ENCODE measurements at regions of chr17 and their contacts with region 1.

Region 1: DNA sequence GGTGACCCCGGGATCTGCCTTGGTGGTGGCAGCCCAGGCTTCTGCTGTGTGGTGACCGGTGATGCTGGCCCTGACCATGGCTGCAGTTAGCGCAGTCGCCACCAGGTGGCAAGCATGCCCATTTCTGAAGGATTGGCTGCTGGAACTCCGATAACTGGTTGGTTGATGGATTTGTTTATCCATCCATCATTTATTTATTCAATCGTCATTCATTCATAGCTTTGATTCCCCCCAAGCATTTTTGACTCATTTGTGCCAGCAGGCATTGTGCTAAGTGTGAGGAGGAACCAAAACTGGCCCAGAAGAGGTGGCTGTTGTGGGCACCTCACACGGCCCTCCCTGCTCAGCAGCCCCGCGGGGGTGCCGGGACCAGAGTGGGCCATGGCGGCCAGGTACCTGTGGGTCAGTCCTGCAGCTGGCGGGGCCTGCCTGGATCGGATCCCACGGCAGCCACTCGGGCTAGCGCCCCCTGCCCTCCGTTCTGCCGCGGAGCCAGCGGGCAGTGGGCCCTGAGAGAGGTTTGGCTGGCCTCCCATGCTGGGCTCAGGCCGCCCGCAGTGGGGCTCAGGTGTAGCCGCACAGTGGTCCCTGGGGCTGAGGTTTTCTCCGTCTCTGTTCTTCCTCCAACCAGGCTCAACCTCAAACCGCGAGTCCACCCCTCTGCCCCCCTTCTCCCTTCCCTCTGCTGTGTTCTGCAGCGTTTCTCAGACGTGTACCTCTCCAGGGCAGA is 28.8 kb upstream of the ITGA3 start:
- DNase-seq: peak; percentile 90
- H3K4me3 ChIP-seq: peak overlapping the region; percentile 8 to 45 (median 40)
- H3K27ac ChIP-seq: peak overlapping the region; percentile 51 to 71 (median 66)
- H3K4me1 ChIP-seq: peaks cover 0 to 24% (median 20%) of the 10 kb centered on the region in 4 donors
- H3K27me3 ChIP-seq: no peaks in the 10 kb centered on the region
- CTCF ChIP-seq: peak; percentile 94 to 95 (median 95)
- EP300 ChIP-seq: no peak
- POLR2A ChIP-seq: no peak

Region 2: DNA sequence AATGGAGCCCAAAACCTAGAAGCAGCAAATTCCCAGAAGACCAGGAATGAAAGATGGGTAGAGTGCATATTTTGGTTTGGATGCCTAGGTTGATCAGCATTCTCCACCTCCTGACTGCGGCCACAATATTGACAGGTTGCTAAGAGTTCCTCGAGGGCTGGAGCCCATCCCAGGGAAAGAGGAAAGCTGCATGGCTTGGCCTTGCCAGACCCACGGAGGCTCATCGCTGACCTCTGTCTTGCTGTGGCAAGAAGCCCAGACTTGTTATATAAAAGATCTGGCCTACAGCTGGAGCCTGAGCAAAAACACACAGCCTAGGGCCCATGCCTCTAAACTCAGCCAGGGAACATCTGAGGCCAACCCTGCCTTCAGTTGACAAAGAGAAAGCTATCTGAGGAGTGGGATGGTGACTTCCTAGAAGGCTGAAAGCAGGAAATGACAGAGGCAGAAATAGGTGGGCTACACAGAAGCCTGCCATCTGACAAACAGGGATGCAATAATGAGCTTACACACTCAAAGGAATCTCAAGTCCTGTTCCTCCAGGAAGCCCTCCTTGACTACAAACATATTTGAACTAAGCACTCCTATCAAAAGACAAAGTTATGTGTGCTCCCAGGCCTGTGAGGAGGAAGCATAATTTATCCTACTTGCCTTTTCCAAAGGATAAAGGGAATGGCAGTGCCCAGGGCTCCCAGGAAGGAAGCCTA is 296.8 kb before region 1 on chr17:
- intact Hi-C with region 1: no loop called
- DNase-seq: peak; percentile 94
- H3K4me3 ChIP-seq: no peak overlapping the region
- H3K27ac ChIP-seq: peak overlapping the region; percentile 83 to 88 (median 84)
- H3K4me1 ChIP-seq: peaks cover 0 to 57% (median 46%) of the 10 kb centered on the region in 4 donors
- H3K27me3 ChIP-seq: no peaks in the 10 kb centered on the region
- CTCF ChIP-seq: no peak
- EP300 ChIP-seq: peak in 2 of 4 donors; percentile 31 to 57
- POLR2A ChIP-seq: no peak

Region 3: DNA sequence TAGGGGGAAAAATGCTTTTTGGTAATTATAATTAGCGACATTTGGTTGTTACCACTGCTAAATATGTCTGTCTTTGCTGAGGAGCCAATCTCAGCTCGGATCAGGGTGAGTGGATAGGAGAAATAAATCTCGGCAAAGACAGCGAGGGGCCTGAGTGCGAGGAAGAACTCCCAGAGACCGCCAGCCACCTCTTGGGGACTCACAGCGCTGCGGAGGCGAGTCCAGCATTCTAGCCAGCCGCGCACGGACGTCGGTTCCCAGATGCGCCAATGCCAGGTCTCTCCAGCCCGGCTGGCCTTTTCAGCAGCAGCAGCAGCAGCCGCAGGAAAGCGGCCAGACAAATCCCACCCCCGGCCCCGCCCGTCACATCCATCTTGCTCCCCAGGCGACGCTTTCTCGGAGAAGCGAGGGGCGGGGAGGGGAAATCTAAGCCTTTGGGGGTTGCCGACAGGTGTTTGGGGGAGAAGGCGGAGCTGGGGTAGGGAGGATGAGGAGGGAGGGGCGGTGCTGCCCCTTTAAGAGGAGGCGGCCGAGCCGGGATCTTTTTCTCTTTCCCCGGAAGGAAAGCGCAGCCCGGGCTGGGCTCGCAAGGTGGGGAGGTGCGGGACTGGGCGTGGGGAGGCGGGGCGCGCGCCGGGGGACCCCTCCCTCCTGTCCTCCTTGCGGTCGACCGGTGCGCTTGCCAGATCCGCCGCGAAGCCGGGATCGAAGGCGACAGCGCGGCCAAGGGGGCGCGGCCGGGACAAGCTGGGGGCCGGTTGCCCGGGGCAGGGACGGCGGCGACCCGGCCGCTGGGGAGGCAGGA is 28.6 kb after region 1 on chr17 and contains the start of gene ITGA3:
- intact Hi-C with region 1: loop called (anchors 1 kb)
- DNase-seq: peak; percentile 94
- H3K4me3 ChIP-seq: peak within 1 kb of the TSS; percentile 63 to 89 (median 80)
- H3K27ac ChIP-seq: peak within 1 kb of the TSS; percentile 91 to 96 (median 94)
- H3K4me1 ChIP-seq: peaks cover 0 to 64% (median 52%) of the 10 kb centered on the region in 4 donors
- H3K27me3 ChIP-seq: no peaks in the 10 kb centered on the region
- CTCF ChIP-seq: no peak
- EP300 ChIP-seq: no peak
- POLR2A ChIP-seq: peak in 1 of 2 donors; percentile 25
- total RNA-seq, gene ITGA3: 19.9 to 54.0 (median 39.5) TPM

Region 4: GRCh38 chr17:50064258-50065001 is 37.4 kb after region 1 on chr17:
- intact Hi-C with region 1: loop called (anchors 2 kb)
- DNase-seq: peak; percentile 86
- H3K4me3 ChIP-seq: no peak overlapping the region
- H3K27ac ChIP-seq: peak overlapping the region; percentile 91 to 96 (median 94)
- H3K4me1 ChIP-seq: peaks cover 0 to 64% (median 63%) of the 10 kb centered on the region in 4 donors
- H3K27me3 ChIP-seq: no peaks in the 10 kb centered on the region
- CTCF ChIP-seq: no peak
- EP300 ChIP-seq: no peak
- POLR2A ChIP-seq: no peak

Region 5: DNA sequence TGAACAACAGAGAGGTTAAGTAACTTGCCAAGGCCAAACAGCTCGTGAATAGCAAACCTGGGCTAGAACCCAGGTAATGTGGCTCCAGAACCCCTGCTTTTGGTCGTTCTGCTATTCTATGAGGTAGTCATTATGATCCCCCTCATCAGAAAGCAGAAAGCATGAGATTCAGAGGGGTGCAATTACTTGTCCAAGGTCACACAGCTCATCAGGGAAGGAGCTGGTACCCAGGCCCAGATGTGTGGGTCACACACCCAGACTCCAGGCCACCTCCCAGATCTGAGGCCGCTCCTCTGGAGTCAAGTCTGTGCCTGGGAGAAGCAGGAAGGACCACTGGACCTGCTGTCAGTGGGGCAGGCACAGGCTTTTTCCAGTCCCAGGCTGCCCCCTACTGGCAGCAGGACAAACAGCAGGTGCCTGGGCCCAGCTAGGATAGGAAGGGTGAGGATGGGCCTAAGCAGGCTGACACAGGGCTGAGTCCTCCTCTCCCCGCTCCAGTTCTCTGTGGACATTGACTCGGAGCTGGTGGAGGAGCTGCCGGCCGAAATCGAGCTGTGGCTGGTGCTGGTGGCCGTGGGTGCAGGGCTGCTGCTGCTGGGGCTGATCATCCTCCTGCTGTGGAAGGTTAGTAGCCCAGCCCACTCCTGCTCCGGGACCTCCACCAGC is 60.3 kb after region 1 on chr17:
- intact Hi-C with region 1: loop called (anchors 1 kb)
- DNase-seq: peak; percentile 87
- H3K4me3 ChIP-seq: no peak overlapping the region
- H3K27ac ChIP-seq: peak overlapping the region in 1 of 4 donors; percentile 13
- H3K4me1 ChIP-seq: no peaks in the 10 kb centered on the region
- H3K27me3 ChIP-seq: no peaks in the 10 kb centered on the region
- CTCF ChIP-seq: peak; percentile 95 to 97 (median 97)
- EP300 ChIP-seq: no peak
- POLR2A ChIP-seq: no peak

Region 6: GRCh38 chr17:50304781-50305404 is 277.8 kb after region 1 on chr17:
- intact Hi-C with region 1: loop called (anchors 10 kb)
- DNase-seq: no peak
- H3K4me3 ChIP-seq: no peak overlapping the region
- H3K27ac ChIP-seq: peak overlapping the region in 2 of 4 donors; percentile 8 to 25
- H3K4me1 ChIP-seq: peaks cover 0 to 13% (median 11%) of the 10 kb centered on the region in 4 donors
- H3K27me3 ChIP-seq: peaks cover 0 to 3% (median 0%) of the 10 kb centered on the region in 3 donors
- CTCF ChIP-seq: no peak
- EP300 ChIP-seq: no peak
- POLR2A ChIP-seq: no peak

Measured in sigmoid colon (tissue), 7 donors.